PC-9 (cell line): ENCODE measurements at regions of chr15 and their contacts with region 1.

Region 1: GRCh38 chr15:90400406-90401314 is 12.6 kb downstream of the IQGAP1 start:
- DNase-seq: peak; percentile 70 to 98
- H3K4me3 ChIP-seq: peak overlapping the region; percentile 35; the same call in 1 of the 2 replicates
- H3K27ac ChIP-seq: peak overlapping the region; percentile 88
- H3K4me1 ChIP-seq: peaks cover 65% of the 10 kb centered on the region
- H3K27me3 ChIP-seq: no peaks in the 10 kb centered on the region
- CTCF ChIP-seq: no peak

Region 2: DNA sequence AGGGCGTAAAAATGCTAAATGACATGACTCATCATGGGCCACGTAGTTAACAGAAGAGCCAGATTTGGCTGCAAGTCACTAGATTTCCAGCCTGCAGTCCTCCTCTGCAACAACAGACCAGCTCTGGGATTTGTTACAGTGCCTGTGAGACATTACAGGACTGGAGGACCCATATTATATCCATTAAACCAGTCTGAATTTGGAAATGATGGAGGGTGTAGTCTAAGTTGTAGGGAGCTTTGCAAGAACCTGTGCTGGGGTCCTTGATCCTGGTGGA is 37.8 kb before region 1 on chr15:
- CTCF ChIA-PET with region 1: no interaction called
- POLR2A ChIA-PET with region 1: no interaction called
- intact Hi-C with region 1: loop called (anchors 1 kb)
- DNase-seq: peak; percentile 21 to 71
- H3K4me3 ChIP-seq: no peak overlapping the region
- H3K27ac ChIP-seq: peak overlapping the region; percentile 94
- H3K4me1 ChIP-seq: peaks cover 47% of the 10 kb centered on the region
- H3K27me3 ChIP-seq: no peaks in the 10 kb centered on the region
- CTCF ChIP-seq: no peak

Region 3: DNA sequence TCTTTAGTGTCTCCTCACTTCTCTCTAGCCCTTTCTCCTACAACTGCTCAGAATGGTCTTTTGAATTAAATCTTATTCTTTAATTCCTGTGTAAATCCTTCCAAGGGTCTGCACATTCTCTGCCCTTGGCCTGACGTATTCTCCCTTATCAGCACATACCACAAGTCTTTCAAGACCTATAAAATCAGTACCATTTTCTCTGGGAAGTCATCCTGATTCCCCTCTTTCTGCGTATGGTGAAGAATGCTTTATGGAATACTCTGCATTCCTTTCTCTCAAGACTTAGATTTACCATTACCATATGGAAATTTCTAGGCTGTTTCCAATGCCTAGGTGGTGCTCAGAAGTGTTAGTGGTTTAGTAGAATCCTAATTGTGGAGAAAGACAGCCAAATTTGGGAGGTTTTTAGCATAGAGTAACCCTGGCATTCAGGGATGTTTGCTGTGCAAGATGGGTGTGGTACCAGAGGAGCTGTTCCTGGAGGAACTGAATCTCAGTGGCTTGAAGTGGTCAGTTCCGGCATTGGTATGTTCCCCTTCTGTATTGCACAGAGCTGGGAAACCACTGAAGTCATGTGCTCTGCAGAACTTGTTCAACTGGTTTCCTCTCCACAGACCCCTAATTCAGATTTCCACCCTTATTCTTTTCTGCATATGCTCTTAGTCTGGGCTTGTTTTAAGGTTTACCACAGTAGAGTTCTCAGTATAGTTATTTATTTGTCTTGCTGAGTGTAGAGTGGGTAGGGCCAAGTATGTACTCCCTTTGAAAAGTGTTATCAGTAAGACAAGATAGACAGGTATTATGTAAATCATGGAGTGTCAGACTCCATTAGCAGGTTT is 11.9 kb after region 1 on chr15:
- CTCF ChIA-PET with region 1: no interaction called
- POLR2A ChIA-PET with region 1: no interaction called
- intact Hi-C with region 1: loop called (anchors 1 kb)
- DNase-seq: peak; percentile 67 to 89
- H3K4me3 ChIP-seq: peak overlapping the region; percentile 41; the same call in 1 of the 2 replicates
- H3K27ac ChIP-seq: peak overlapping the region; percentile 87
- H3K4me1 ChIP-seq: peaks cover 55% of the 10 kb centered on the region
- H3K27me3 ChIP-seq: no peaks in the 10 kb centered on the region
- CTCF ChIP-seq: no peak

Region 4: GRCh38 chr15:90451053-90451850 is 50.6 kb after region 1 on chr15:
- CTCF ChIA-PET with region 1: no interaction called
- POLR2A ChIA-PET with region 1: no interaction called
- intact Hi-C with region 1: loop called (anchors 1 kb)
- DNase-seq: peak; percentile 53 to 75
- H3K4me3 ChIP-seq: no peak overlapping the region
- H3K27ac ChIP-seq: no peak overlapping the region
- H3K4me1 ChIP-seq: peaks cover 18% of the 10 kb centered on the region
- H3K27me3 ChIP-seq: no peaks in the 10 kb centered on the region
- CTCF ChIP-seq: no peak